ENCODE measurements at regions of chr3 and their contacts with region 1.

Region 1: DNA sequence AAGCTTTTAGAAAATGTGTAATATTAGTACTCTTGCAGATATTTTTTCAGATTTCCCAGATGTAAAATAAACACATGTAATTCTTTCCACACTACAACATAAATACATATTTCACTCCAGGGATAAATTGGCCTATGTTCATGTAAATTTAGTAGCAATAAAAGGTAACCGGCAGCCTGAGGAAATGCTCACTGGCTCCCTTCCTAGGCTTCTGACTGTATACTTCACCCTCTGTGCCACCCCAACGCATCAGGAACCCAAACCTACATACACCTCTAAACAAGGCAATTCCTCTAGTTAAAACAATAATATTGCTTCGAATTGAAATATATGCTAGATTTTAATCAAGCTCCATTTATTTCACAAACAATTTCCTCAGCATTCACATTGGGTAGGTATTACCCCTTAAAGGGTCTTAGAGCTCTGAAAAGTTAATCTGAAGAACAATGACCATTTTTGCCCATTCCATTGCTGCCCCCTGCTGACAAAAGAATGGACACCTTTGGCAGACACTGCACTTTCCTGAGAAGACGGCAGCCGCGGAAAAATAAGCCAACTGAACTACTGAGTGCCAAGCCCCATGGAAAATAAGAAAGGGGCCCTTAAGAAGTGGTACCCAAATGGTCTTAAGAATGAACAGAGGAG is 212.5 kb downstream of the OSBPL10 start:
- DNase-seq: peak in 1 of 2 donors; percentile 70
- ATAC-seq: peak in 7 of 8 donors; percentile 57 to 76 (median 68)
- H3K4me3 ChIP-seq: no peak overlapping the region
- H3K27ac ChIP-seq: no peak overlapping the region
- H3K4me1 ChIP-seq: peaks cover 0 to 6% (median 0%) of the 10 kb centered on the region in 9 donors
- H3K27me3 ChIP-seq: no peaks in the 10 kb centered on the region
- CTCF ChIP-seq: peak; percentile 50 to 81 (median 77)

Region 2: DNA sequence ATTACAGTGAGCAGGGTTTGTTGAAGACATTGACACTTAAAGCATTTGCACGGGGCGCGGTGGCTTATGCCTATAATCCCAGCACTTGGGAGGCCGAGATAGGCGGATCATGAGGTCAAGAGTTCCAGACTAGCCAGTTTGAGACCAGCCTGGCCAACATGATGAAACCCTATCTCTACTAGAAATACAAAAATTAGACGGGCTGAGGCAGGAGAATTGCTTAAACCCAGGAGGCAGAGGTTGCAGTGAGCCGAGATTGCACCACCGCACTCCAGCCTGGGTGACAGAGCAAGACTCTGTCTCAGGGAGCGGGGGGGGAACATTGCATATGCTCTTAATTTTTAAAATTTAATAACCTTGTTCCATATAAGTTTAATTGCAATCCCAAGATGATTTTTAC is 224.0 kb before region 1 on chr3:
- intact Hi-C with region 1: loop called in 1 of 10 experiments (anchors 10 kb)
- DNase-seq: peak in 1 of 2 donors; percentile 22
- ATAC-seq: peak in 6 of 8 donors; percentile 25 to 73 (median 52)
- H3K4me3 ChIP-seq: peak overlapping the region in 1 of 10 donors; percentile 1
- H3K27ac ChIP-seq: peak overlapping the region in 3 of 10 donors; percentile 4 to 10 (median 7)
- H3K4me1 ChIP-seq: peaks cover 3 to 89% (median 37%) of the 10 kb centered on the region in 9 donors
- H3K27me3 ChIP-seq: no peaks in the 10 kb centered on the region
- CTCF ChIP-seq: no peak

Region 3: DNA sequence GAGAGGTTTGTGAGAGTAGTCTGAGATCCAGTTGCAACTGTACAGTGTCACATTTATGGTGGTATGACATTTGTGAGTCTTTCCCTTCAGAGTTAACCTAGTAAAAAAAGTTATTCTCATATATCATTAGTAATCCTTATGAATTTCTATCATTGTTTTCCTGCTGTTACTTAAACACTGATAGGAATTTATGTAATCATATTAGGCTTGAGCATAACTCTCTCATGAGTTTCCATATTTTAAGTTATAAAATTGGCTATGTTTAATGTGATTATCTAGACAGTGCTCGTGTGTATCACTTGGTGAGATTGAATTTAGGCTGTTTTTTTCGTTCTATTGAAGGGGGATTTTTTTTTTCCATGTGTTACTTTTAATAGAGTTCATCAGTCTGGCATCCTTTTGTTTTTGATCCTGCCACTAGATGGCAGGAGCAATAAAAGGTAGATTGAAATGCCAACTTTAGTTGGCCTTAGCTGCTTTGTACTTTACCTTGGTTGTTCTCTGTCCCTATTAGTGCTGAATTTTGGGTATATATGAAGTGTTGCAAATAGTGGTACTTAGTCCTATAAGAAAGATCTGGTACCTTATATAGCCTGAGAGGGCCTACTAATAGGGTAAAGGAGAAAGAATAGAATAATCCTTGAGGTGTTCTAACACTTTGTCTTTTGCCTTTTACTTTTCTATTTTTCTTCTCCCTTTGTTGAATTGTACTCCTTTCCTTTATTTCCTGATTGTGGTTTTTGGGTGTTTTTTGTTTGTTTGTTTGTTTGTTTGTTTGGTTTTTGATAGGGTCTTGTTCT is 217.9 kb before region 1 on chr3:
- intact Hi-C with region 1: loop called in 7 of 10 experiments (anchors 1 to 10 kb)
- DNase-seq: no peak
- ATAC-seq: peak in 5 of 8 donors; percentile 43 to 71 (median 59)
- H3K4me3 ChIP-seq: no peak overlapping the region
- H3K27ac ChIP-seq: no peak overlapping the region
- H3K4me1 ChIP-seq: peaks cover 10 to 66% (median 53%) of the 10 kb centered on the region in 9 donors
- H3K27me3 ChIP-seq: no peaks in the 10 kb centered on the region
- CTCF ChIP-seq: peak; percentile 30 to 78 (median 68)

Region 4: DNA sequence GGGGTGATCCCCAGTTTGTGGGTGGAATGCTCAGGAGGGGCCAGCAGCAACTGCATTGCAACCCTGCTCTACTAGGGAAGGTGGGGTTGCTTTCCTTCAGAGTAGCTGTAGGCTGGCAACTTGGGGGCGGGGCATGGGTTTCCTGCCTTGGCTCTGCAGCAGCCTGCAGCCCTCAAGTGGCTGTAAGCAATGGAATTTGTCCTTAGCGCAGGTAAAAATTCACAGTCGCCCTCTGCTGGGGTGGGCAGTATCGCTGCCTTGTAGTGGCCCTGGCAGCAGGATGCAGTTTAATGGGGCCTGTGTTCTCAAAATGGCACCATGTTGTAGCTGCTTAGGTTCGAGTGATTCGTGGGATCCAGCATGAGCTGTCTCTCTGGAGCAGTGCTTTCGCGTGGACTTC is 206.1 kb before region 1 on chr3:
- intact Hi-C with region 1: loop called in 2 of 10 experiments (anchors 5 to 10 kb)
- DNase-seq: peak in 1 of 2 donors; percentile 17
- ATAC-seq: peak in 4 of 8 donors; percentile 10 to 59 (median 24)
- H3K4me3 ChIP-seq: no peak overlapping the region
- H3K27ac ChIP-seq: no peak overlapping the region
- H3K4me1 ChIP-seq: peaks cover 0 to 60% (median 30%) of the 10 kb centered on the region in 9 donors
- H3K27me3 ChIP-seq: no peaks in the 10 kb centered on the region
- CTCF ChIP-seq: no peak